GM12878 (cell line): ENCODE measurements at regions of chr1 and their contacts with region 1.

Region 1: GRCh38 chr1:56322211-56322610 is 257.2 kb downstream of the PLPP3 start:
- DNase-seq: no peak
- ATAC-seq: no peak
- H3K4me3 ChIP-seq: no peak overlapping the region
- H3K27ac ChIP-seq: no peak overlapping the region
- H3K4me1 ChIP-seq: no peaks in the 10 kb centered on the region
- H3K27me3 ChIP-seq: no peaks in the 10 kb centered on the region
- CTCF ChIP-seq: no peak
- EP300 ChIP-seq: no peak
- POLR2A ChIP-seq: no peak
- RAD21 ChIP-seq: no peak

Region 2: DNA sequence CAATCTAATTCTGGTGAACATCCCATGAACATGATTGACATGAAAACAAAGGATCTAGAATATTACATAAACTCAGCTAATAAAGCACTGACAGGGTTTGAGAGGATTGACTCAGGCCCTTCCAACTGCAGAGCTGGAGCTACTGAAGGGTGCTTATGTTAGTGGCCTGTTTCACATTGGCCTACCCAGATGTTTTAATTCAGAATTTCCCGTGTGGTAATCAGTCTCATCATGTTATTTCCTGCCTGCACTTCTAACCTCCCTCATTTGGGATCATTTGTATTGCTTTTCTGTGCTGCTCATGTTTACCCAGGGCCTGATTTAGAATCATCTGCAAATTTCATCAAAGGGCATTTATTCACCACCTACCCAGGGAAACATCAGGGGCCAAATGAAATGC is 13.1 kb before region 1 on chr1:
- CTCF ChIA-PET with region 1: interaction called, 3 read pairs
- POLR2A ChIA-PET with region 1: interaction called, 5 read pairs
- RAD21 ChIA-PET with region 1: interaction called, 3 read pairs
- SMC1A ChIA-PET with region 1: interaction called, 19 read pairs
- in situ Hi-C with region 1: no loop called
- intact Hi-C with region 1: no loop called
- DNase-seq: no peak
- ATAC-seq: no peak
- H3K4me3 ChIP-seq: no peak overlapping the region
- H3K27ac ChIP-seq: no peak overlapping the region
- H3K4me1 ChIP-seq: no peaks in the 10 kb centered on the region
- H3K27me3 ChIP-seq: peaks cover 0 to 2% of the 10 kb centered on the region in 2 experiments; a peak in 1 of 4 replicates
- CTCF ChIP-seq: no peak
- EP300 ChIP-seq: no peak
- POLR2A ChIP-seq: no peak
- RAD21 ChIP-seq: no peak